ENCODE measurements at regions of chr6 and their contacts with region 1.

Region 1: DNA sequence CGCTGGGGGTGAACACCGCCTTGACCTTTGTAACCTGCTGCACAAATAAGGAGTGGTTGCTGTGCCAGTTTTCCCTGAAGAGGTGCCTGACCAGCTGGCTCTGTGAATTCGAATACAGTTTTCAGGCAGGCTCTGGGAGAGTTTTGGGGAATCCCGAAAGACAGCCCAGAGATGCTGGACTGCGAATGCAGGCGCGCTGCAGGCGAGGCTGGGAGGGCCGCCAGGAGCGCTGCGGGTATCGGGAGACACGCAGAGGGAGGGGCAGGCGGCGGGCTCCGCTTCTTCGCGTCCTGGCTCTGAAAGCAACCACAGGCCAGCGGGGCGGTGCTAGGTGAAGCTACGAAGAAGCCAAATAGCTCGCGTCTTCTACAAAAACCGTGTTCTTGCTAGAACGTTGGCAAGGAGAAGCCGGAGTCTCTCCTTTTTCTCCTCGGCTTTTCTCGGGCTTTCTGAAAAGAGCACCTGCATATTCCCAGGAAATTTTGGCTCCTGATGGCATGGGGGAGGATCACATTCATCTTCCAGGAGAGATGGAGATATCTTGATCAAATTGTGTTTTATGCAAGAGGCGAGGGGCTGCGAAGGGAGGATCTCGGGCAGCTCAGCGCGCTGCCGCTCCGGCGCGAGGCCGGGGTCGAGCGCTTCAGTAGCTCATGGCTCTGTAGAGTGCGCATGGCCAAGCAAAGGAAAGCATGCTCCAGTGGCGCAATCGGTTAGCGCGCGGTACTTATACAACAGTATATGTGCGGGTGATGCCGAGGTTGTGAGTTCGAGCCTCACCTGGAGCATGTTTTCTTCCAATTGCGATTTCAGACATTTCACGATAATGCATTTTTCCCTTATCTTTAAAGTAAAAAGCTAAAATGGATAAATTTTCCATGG is 158.1 kb upstream of the ZNF184 start:
- DNase-seq: peak; percentile 82 to 98
- H3K4me3 ChIP-seq: peak overlapping the region; percentile 83 to 97 (median 94)
- H3K27ac ChIP-seq: no peak overlapping the region
- H3K4me1 ChIP-seq: peaks cover 0 to 6% (median 2%) of the 10 kb centered on the region in 4 experiments; a peak in 3 of 7 replicates
- H3K27me3 ChIP-seq: peaks cover 0 to 3% (median 0%) of the 10 kb centered on the region in 4 experiments; a peak in 1 of 7 replicates
- CTCF ChIP-seq: peak in 2 of 3 experiments; percentile 8 to 40; a peak in 1 of 4 replicates
- EP300 ChIP-seq: no peak
- POLR2A ChIP-seq: no peak
- RAD21 ChIP-seq: peak in 1 of 2 experiments; percentile 7; a peak in 1 of 4 replicates

Region 2: DNA sequence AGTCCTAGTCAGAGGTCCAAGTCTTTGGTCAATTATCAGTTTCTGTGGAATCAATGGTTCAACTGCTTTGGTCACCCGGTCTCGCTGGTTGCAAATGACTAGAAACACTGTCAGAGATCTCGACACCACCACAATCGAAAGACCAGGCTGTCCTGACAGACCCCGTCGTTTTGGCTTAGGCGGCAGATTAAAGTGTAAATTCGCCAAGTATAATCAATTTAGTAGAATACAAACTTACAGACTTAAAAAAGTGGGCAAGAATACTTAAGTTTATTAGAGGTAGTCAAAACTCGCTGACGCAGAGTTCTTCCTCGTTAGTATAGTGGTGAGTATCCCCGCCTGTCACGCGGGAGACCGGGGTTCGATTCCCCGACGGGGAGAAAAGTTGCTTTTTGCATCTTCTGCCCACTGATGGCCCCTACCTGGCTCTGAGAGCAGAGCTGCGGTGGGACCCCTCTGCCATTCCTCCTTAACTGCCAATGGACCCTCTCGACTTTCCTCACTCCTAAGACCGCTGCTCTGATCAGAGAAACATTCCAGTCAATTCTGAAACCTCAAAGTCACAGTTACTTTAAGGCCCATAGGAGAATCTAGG is 127.4 kb before region 1 on chr6:
- CTCF ChIA-PET with region 1: no interaction called
- POLR2A ChIA-PET with region 1: no interaction called
- DNase-seq: peak in 1 of 2 experiments; percentile 96
- H3K4me3 ChIP-seq: peak overlapping the region; percentile 67 to 98 (median 94)
- H3K27ac ChIP-seq: no peak overlapping the region
- H3K4me1 ChIP-seq: peaks cover 0 to 8% (median 0%) of the 10 kb centered on the region in 4 experiments; a peak in 2 of 7 replicates
- H3K27me3 ChIP-seq: no peaks in the 10 kb centered on the region
- CTCF ChIP-seq: no peak
- EP300 ChIP-seq: no peak
- POLR2A ChIP-seq: no peak
- RAD21 ChIP-seq: no peak

Region 3: GRCh38 chr6:27575594-27576361 is 55.2 kb before region 1 on chr6:
- CTCF ChIA-PET with region 1: no interaction called
- POLR2A ChIA-PET with region 1: no interaction called
- DNase-seq: no peak
- H3K4me3 ChIP-seq: peak overlapping the region in 2 of 4 experiments; percentile 36 to 43; a peak in 2 of 8 replicates
- H3K27ac ChIP-seq: no peak overlapping the region
- H3K4me1 ChIP-seq: no peaks in the 10 kb centered on the region
- H3K27me3 ChIP-seq: no peaks in the 10 kb centered on the region
- CTCF ChIP-seq: no peak
- EP300 ChIP-seq: no peak
- POLR2A ChIP-seq: no peak
- RAD21 ChIP-seq: no peak

Region 4: GRCh38 chr6:27608916-27609883 is 21.8 kb before region 1 on chr6:
- CTCF ChIA-PET with region 1: interaction called, 28 read pairs
- POLR2A ChIA-PET with region 1: interaction called, 3 read pairs
- DNase-seq: peak in 1 of 2 experiments; percentile 47
- H3K4me3 ChIP-seq: no peak overlapping the region
- H3K27ac ChIP-seq: no peak overlapping the region
- H3K4me1 ChIP-seq: no peaks in the 10 kb centered on the region
- H3K27me3 ChIP-seq: no peaks in the 10 kb centered on the region
- CTCF ChIP-seq: peak in 2 of 3 experiments; percentile 74 to 89; a peak in 3 of 4 replicates
- EP300 ChIP-seq: no peak
- POLR2A ChIP-seq: no peak
- RAD21 ChIP-seq: peak; percentile 82 to 86

Region 5: GRCh38 chr6:27617700-27618689 is 13.0 kb before region 1 on chr6:
- CTCF ChIA-PET with region 1: interaction called, 17 read pairs
- POLR2A ChIA-PET with region 1: no interaction called
- DNase-seq: peak in 1 of 2 experiments; percentile 71
- H3K4me3 ChIP-seq: peak overlapping the region; percentile 80 to 97 (median 90)
- H3K27ac ChIP-seq: no peak overlapping the region
- H3K4me1 ChIP-seq: peaks cover 0 to 2% (median 0%) of the 10 kb centered on the region in 4 experiments; a peak in 2 of 7 replicates
- H3K27me3 ChIP-seq: no peaks in the 10 kb centered on the region; a peak in 1 of 7 replicates
- CTCF ChIP-seq: no peak
- EP300 ChIP-seq: no peak
- POLR2A ChIP-seq: no peak
- RAD21 ChIP-seq: no peak